OCI-LY7 (cell line): ENCODE measurements at regions of chr9 and their contacts with region 1.

Region 1: DNA sequence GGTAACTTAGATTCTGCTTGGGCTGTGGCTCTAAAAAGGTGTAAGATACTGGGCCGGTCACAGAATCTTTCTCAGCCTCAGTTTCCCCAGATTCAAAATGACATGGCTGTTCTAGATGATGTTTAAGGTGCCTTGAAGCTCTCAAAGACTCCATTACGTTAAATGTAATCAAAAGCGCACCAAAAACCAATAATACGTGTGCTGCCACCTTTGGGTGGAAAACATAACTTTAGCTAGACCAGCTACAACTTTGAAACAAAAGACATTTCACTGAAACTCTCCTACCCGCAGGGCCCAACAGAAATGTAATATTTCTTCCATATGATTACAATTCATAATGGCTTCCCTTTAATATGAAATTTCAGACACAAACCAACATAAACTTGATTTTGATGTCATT is 35.0 kb upstream of the PCSK5 start:
- DNase-seq: peak; percentile 46
- H3K4me3 ChIP-seq: no peak overlapping the region
- H3K27ac ChIP-seq: no peak overlapping the region
- H3K4me1 ChIP-seq: no peaks in the 10 kb centered on the region
- CTCF ChIP-seq: peak; percentile 79

Region 2: GRCh38 chr9:75487856-75488718 is 367.4 kb before region 1 on chr9:
- CTCF ChIA-PET with region 1: interaction called, 10 read pairs
- POLR2A ChIA-PET with region 1: no interaction called
- intact Hi-C with region 1: no loop called
- DNase-seq: no peak
- H3K4me3 ChIP-seq: no peak overlapping the region
- H3K27ac ChIP-seq: no peak overlapping the region
- H3K4me1 ChIP-seq: no peaks in the 10 kb centered on the region
- CTCF ChIP-seq: no peak

Region 3: GRCh38 chr9:75601279-75601678 is 254.2 kb before region 1 on chr9:
- CTCF ChIA-PET with region 1: interaction called, 3 read pairs
- POLR2A ChIA-PET with region 1: interaction called, 7 read pairs
- intact Hi-C with region 1: loop called (anchors 10 kb)
- DNase-seq: peak; percentile 48
- H3K4me3 ChIP-seq: no peak overlapping the region
- H3K27ac ChIP-seq: no peak overlapping the region
- H3K4me1 ChIP-seq: peaks cover 25% of the 10 kb centered on the region
- CTCF ChIP-seq: peak; percentile 69

Region 4: GRCh38 chr9:75739884-75740611 is 115.5 kb before region 1 on chr9:
- CTCF ChIA-PET with region 1: no interaction called
- POLR2A ChIA-PET with region 1: no interaction called
- intact Hi-C with region 1: no loop called
- DNase-seq: no peak
- H3K4me3 ChIP-seq: no peak overlapping the region
- H3K27ac ChIP-seq: no peak overlapping the region
- H3K4me1 ChIP-seq: no peaks in the 10 kb centered on the region
- CTCF ChIP-seq: no peak

Region 5: DNA sequence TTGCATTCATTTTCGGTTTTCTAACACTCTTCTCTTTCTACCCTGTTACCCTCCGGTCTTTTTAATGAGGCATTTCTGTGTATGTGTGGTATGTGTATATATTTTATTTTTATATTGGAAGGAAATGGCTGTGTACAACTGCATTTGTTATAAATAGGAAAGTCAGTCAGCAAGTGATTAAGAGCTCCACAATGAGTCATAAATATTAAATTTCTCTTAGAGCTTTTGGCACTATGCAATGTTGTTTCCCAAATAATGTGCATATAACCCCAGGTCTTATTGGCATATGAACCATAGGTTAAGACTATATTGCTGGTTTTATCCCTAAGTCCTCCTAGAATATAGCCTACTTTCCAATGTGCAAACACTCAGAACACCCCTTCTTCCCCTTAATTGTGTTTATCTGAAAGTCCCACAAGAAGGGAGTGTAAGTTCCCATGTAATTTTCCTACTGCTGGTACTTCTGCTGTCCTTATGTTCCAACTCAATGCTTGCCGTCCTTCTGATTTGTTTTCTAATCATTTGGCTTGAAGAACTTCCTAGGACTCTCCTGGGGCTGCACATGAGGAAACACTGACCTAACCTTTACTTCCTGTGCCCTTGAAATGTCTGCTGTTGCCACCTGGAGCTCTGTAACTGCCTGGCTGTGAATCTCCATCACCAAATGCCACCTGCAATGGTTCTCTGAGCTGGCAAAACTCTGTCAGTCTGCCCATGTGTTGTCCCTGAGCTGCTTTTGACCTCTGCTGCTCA is 30.5 kb before region 1 on chr9:
- CTCF ChIA-PET with region 1: no interaction called
- POLR2A ChIA-PET with region 1: no interaction called
- intact Hi-C with region 1: no loop called
- DNase-seq: no peak
- H3K4me3 ChIP-seq: no peak overlapping the region
- H3K27ac ChIP-seq: no peak overlapping the region
- H3K4me1 ChIP-seq: no peaks in the 10 kb centered on the region
- CTCF ChIP-seq: no peak

Region 6: DNA sequence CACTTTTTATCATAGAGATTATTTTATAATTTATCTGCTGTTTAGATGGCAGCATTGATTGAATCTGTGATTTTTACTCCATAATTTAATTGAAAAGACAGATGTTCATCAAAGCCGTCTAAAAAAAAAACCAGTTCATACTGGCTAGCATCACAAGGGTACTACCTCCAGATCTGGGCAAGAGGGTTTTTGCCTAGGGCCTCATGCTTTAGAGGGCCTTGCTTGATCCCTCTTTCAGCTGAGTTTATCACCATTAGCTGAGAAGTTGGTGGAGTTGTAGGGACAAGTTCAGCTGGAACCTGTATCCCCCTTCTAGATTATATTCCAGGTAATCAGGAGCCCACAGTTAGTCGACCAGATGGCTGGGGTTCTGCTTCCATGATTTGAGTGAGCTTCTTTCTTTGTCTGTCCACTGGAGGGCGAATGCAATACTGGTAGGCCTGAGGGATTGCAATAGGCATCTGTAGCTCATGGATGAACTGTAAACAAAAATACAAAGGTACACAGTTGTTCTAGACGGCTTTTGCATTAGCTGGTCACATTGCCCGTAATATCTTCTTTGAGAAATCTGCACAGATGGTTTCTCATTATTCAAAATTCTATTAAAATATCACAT is 123.7 kb after region 1 on chr9:
- CTCF ChIA-PET with region 1: no interaction called
- POLR2A ChIA-PET with region 1: no interaction called
- intact Hi-C with region 1: no loop called
- DNase-seq: peak; percentile 8
- H3K4me3 ChIP-seq: no peak overlapping the region
- H3K27ac ChIP-seq: no peak overlapping the region
- H3K4me1 ChIP-seq: no peaks in the 10 kb centered on the region
- CTCF ChIP-seq: peak; percentile 55

Region 7: GRCh38 chr9:76032038-76032796 is 176.7 kb after region 1 on chr9:
- CTCF ChIA-PET with region 1: no interaction called
- POLR2A ChIA-PET with region 1: no interaction called
- intact Hi-C with region 1: no loop called
- DNase-seq: no peak
- H3K4me3 ChIP-seq: no peak overlapping the region
- H3K27ac ChIP-seq: no peak overlapping the region
- H3K4me1 ChIP-seq: no peaks in the 10 kb centered on the region
- CTCF ChIP-seq: no peak